ENCODE measurements at regions of chr15 and their contacts with region 1.

Region 1: GRCh38 chr15:34209421-34210282 is at the start of gene KATNBL1:
- DNase-seq: peak; percentile 98
- ATAC-seq: peak; percentile 94
- H3K4me3 Mint-ChIP-seq: peak within 1 kb of the TSS; percentile 91
- H3K27ac Mint-ChIP-seq: peak within 1 kb of the TSS; percentile 84
- H3K4me1 Mint-ChIP-seq: peaks cover 17% of the 10 kb centered on the region
- H3K27me3 Mint-ChIP-seq: peaks cover 6% of the 10 kb centered on the region
- total RNA-seq, gene KATNBL1: 49.1 to 49.5 TPM

Region 2: GRCh38 chr15:34101366-34102175 is 108.1 kb before region 1 on chr15 and contains the starts of genes EMC7 and PGBD4:
- POLR2A ChIA-PET with region 1: interaction called, 14 read pairs
- DNase-seq: peak; percentile 99
- ATAC-seq: peak; percentile 99
- H3K4me3 Mint-ChIP-seq: peak within 1 kb of the TSS; percentile 98
- H3K27ac Mint-ChIP-seq: peak within 1 kb of the TSS; percentile 99
- H3K4me1 Mint-ChIP-seq: peaks cover 30% of the 10 kb centered on the region
- H3K27me3 Mint-ChIP-seq: no peaks in the 10 kb centered on the region
- total RNA-seq, gene EMC7: 46.4 to 57.5 TPM
- total RNA-seq, gene PGBD4: 3.8 to 4.5 TPM

Region 3: DNA sequence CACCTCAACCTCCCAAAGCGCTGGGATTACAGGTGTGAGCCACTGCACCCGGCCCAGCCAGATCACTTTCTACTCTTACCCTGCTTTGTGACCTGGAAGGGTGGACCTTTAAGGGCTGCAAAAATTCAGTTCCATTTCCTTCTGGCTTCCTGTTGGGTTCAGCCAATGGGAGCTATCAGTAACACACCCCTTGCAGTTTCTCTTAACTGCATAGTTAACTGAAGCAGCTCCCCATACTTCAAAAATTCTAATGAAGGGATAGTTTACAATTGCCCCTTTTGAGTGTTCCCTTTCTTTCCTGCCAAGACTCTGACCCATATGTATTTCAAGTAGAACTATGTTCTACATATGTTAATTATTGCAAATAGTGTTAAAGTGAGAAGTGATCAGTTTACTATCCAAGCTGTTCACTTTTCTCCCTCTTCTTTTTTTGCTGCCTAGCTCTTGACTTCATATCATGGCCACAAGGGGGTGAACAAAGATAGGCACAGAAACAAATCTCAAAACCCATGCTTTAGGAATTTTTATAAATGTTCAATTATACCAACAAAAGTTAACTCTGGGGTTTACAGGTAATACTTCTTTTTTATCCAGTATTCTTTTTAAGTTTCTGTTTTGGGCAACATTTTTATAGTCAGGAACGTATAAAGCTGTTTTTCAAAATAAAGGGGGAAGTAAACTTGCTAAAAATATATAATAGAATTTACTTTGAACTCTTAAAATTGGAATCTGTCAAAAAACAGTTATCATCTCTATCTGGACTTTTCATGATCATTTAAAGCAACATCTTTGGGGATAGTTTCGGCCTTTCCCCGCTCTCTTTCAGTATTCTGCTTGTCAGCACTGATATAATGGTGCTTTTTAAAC is 99.6 kb before region 1 on chr15:
- POLR2A ChIA-PET with region 1: interaction called, 10 read pairs
- DNase-seq: no peak
- ATAC-seq: peak; percentile 58
- H3K4me3 Mint-ChIP-seq: no peak overlapping the region
- H3K27ac Mint-ChIP-seq: no peak overlapping the region
- H3K4me1 Mint-ChIP-seq: peaks cover 1% of the 10 kb centered on the region
- H3K27me3 Mint-ChIP-seq: peaks cover 3% of the 10 kb centered on the region

Region 4: GRCh38 chr15:34223904-34224596 is 14.4 kb after region 1 on chr15:
- POLR2A ChIA-PET with region 1: interaction called, 16 read pairs
- DNase-seq: no peak
- ATAC-seq: no peak
- H3K4me3 Mint-ChIP-seq: peak overlapping the region; percentile 92
- H3K27ac Mint-ChIP-seq: peak overlapping the region; percentile 89
- H3K4me1 Mint-ChIP-seq: peaks cover 21% of the 10 kb centered on the region
- H3K27me3 Mint-ChIP-seq: peaks cover 5% of the 10 kb centered on the region

Region 5: DNA sequence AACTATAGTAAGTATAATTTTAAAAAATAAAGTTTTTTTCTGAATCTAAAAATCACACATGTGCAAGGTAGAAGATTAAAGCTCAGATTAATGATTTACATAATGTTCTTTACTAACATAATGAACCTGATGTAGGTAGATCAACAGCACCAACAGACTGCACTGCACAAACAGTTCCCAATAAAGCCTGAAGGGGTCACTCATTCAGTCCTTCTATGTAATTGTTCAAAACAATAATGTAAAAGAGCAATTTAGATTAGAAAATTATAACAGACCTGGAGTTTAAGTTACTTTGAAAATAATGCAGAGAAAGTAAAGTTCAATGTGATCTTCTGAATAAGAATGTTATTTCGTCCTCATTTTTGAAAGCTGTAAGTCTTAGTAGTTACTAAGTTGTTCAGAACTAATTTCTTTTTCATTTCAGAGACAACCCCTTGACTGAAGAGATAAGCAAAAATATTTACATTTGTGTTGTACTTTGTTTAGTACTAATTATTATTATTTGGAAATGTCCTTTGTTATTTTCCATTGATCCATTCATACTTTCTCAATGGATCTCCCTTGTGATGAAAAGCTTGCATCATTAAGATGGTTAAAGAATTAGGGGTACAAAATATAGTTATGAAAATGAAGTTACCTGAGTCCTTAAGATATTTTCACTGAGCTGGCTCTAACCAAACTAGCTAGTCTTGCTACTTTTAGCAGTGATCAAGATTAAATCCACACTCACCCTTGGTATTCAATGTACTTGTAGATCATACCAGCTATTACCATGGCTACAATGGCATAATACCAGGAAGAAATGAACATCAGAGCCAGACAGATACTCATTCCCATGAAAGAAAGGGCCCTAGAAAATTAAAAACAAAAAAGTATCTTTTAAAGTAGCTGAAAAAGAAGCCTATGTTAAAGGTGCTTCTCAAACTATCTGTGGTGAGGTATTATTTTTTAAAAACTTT is 32.0 kb after region 1 on chr15:
- POLR2A ChIA-PET with region 1: no interaction called
- DNase-seq: no peak
- ATAC-seq: peak; percentile 62
- H3K4me3 Mint-ChIP-seq: no peak overlapping the region
- H3K27ac Mint-ChIP-seq: no peak overlapping the region
- H3K4me1 Mint-ChIP-seq: peaks cover 16% of the 10 kb centered on the region
- H3K27me3 Mint-ChIP-seq: no peaks in the 10 kb centered on the region